Activated CD8-positive, alpha-beta T cell treated with anti-CD3 and anti-CD28 coated beads for 36 hours (primary cell): ENCODE measurements at regions of chr14 and their contacts with region 1.

Region 1: DNA sequence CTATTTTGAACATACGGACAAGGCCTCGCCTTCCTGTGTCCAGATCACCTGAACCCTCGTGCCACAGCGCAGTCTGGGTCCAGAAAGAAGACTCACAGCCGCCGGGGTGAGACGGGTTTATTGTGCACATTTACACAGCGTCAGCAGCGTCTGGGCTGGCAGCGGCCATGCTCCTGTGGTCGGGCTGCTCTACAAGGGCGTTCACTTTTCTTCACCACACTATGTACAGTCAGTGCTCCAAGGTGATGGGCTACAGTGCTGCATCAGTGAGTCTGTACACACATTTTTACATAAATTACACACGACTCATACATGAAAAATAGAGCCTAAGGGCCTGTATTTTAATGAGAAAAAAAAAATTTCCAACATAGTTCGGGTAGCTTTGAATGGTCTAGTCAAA is 18.0 kb downstream of the ZFYVE21 start:
- DNase-seq: no peak
- ATAC-seq: no peak
- H3K4me3 Mint-ChIP-seq: no peak overlapping the region
- H3K27ac Mint-ChIP-seq: no peak overlapping the region
- H3K4me1 Mint-ChIP-seq: no peaks in the 10 kb centered on the region
- H3K27me3 Mint-ChIP-seq: no peaks in the 10 kb centered on the region
- CTCF ChIP-seq: no peak

Region 2: DNA sequence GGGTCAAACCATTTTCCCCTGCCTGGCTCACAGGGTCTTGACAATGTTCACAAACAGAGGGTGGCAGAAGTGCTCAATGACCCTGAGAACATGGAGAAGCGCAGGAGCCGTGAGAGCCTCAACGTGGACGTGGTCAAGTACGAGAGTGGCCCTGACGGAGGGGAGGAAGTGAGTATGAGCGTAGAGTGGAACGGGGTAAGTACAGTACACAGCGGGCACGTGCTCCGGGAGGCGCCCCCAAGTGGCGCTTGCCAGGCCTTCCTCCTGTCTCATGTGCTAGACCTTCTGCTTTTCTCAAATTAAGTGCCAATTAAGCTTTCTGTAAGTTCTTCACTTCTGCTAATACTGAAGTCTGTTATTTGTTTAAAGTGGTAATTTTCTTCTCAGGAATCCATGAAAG is 54.3 kb before region 1 on chr14:
- CTCF ChIA-PET with region 1: no interaction called
- POLR2A ChIA-PET with region 1: no interaction called
- intact Hi-C with region 1: no loop called
- DNase-seq: peak; percentile 71
- ATAC-seq: peak; percentile 92
- H3K4me3 Mint-ChIP-seq: no peak overlapping the region
- H3K27ac Mint-ChIP-seq: peak overlapping the region; percentile 74
- H3K4me1 Mint-ChIP-seq: peaks cover 8% of the 10 kb centered on the region
- H3K27me3 Mint-ChIP-seq: no peaks in the 10 kb centered on the region
- CTCF ChIP-seq: peak; percentile 57

Region 3: DNA sequence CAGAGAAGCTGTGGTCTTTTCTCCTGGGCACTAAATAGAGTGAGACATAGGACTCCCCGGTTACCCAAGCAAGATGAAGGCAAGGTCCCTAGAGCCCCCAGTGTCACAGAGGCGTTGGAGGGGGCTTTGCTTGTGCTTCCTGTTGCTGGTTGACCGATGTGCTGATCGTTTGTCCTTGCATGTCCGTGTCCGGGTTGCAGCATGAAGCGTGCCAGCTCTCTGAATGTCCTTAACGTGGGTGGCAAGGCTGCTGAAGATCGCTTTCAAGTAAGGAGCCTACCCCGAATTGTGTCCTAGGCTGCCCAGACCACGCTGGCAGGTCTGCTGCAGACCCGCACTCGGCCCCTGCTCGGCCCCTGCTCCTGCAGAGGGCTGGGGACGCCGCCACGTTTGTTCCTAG is 41.5 kb before region 1 on chr14:
- CTCF ChIA-PET with region 1: no interaction called
- POLR2A ChIA-PET with region 1: no interaction called
- intact Hi-C with region 1: no loop called
- DNase-seq: no peak
- ATAC-seq: no peak
- H3K4me3 Mint-ChIP-seq: no peak overlapping the region
- H3K27ac Mint-ChIP-seq: no peak overlapping the region
- H3K4me1 Mint-ChIP-seq: peaks cover 4% of the 10 kb centered on the region
- H3K27me3 Mint-ChIP-seq: no peaks in the 10 kb centered on the region
- CTCF ChIP-seq: no peak

Region 4: DNA sequence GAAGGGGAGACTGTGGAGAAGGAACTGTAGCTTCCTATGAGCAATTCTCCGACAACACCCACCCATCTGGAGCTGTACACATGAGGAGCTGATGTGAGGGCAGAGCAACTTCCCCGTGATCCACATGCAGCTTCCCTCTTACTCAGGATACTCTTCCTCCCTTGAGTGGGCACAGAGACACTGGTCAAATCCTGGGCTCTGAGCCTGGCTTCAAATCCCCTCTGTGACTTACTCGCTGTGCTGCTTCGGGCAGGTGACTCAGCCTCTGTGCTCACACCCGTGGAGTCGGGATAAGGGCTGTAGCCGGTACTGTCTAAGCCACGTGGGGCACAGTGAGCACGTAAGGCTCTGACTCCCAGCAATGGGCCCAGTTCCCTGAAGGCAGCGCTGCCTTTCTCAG is 13.1 kb after region 1 on chr14:
- CTCF ChIA-PET with region 1: interaction called, 4 read pairs
- POLR2A ChIA-PET with region 1: interaction called, 10 read pairs
- intact Hi-C with region 1: no loop called
- DNase-seq: no peak
- ATAC-seq: no peak
- H3K4me3 Mint-ChIP-seq: no peak overlapping the region
- H3K27ac Mint-ChIP-seq: no peak overlapping the region
- H3K4me1 Mint-ChIP-seq: peaks cover 19% of the 10 kb centered on the region
- H3K27me3 Mint-ChIP-seq: no peaks in the 10 kb centered on the region
- CTCF ChIP-seq: no peak

Region 5: DNA sequence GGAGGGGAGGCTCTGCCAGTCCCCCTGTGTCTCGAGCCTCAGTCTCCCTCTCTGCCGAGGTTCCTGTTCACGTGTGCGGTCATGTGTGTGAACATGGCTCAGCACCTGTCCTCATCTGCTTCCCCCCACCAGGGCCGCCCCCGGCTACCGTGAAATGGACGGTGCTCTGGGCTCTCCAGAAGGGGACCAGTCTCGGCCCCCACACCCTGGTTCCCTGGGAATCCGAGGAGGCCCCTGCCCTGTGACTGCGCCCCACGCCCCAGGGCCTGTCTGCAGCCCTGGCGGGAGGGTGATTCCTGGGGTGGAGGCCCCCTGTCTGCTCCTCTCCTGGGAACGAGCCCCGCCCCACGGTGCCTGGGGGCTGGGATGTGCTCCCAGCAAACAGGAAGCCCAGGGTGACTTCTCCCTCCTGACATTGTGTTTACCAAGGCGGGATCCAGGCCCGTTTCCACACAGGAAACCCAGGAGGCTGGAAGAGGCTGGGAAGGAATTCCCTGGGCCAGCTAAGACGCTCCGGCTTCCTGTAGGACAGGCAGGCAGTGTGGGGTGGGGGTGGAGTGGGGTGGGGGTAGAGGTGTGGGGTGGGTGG is 451.4 kb after region 1 on chr14:
- CTCF ChIA-PET with region 1: no interaction called
- POLR2A ChIA-PET with region 1: no interaction called
- intact Hi-C with region 1: no loop called
- DNase-seq: no peak
- ATAC-seq: no peak
- H3K4me3 Mint-ChIP-seq: no peak overlapping the region
- H3K27ac Mint-ChIP-seq: no peak overlapping the region
- H3K4me1 Mint-ChIP-seq: no peaks in the 10 kb centered on the region
- H3K27me3 Mint-ChIP-seq: no peaks in the 10 kb centered on the region
- CTCF ChIP-seq: no peak